BJ (cell line): ENCODE measurements at regions of chr6 and their contacts with region 1.

Region 1: DNA sequence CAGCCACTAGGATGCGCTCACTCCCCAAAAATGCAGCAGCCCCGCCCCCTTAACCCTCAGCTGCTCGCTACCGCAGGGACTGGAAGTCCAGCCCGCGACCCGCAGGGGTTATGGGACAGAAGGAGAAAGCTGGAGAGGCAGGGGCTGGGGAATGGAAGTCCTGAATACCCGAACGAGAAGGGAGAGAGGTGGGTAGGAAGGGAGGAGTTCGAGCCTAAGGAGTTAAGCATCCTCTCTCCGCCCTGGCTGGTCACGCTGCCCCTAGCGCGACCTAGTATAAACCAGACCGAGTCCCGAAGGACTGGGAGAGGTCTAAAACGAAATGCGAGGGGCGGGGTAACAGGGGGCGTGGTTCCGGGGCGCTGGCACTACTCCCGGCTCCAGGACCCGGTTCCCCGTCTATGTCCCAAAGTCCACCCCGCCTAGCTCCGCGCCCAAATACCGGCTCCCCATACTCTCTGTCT is 448 bp upstream of the DDAH2 start:
- DNase-seq: peak; percentile 58
- H3K4me3 ChIP-seq: peak overlapping the region; percentile 88
- H3K27me3 ChIP-seq: no peaks in the 10 kb centered on the region
- CTCF ChIP-seq: no peak

Region 2: DNA sequence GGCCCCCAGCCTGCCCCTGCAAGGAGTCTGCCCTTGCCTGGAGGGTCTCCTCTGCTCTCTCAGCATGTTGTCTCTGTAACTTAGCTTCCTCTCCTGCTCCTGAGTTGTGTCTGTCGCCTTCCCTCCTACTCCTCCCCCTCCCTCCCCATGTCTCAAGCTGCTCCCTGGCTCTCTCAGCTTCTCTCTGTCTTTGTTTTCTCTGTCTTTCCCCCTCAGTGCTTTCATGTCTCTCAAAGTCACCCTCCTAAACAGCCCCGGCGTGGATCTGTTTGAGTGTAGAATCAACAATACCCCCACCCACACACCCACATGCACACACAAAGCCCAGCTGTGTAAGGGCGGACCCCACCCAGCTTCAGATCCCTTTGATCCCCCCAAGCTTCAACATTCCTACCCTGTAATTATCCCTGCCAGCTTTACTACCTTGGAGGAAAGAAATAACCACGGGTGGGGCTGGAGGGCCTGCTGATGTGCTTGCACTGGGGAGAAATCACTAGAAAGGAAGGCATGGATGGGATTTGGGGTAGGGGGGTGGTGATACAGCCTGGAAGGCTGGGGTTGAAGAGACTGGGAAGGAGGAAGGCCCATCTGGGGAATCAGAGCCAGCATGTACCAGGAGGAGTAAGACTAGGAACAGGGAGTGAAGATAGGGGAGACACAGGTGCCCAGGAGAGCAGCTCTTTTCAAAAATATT is 15.4 kb before region 1 on chr6:
- CTCF ChIA-PET with region 1: interaction called, 11 read pairs
- POLR2A ChIA-PET with region 1: no interaction called
- DNase-seq: no peak
- H3K4me3 ChIP-seq: no peak overlapping the region
- H3K27me3 ChIP-seq: peaks cover 8% of the 10 kb centered on the region
- CTCF ChIP-seq: no peak

Region 3: DNA sequence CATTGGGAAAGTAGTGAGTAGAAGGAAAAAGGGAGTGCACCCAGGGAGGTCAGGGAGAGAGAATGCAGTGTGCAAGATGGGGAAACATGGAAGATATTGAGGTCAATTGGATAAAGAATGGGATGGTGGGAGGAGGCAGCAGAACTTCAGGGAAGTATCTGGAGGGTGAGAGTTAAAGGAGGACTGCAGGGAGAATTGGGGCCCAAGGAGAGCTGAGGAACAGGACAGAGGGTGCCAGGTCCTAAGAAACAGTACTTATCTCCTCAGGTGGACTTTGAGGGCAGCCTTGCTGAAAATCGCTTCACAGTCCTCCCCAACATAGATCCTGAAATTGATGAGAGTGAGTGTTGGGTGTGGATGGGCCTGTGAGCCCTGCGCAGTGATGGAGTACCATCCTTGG is 28.7 kb after region 1 on chr6:
- CTCF ChIA-PET with region 1: no interaction called
- POLR2A ChIA-PET with region 1: no interaction called
- DNase-seq: no peak
- H3K4me3 ChIP-seq: no peak overlapping the region
- H3K27me3 ChIP-seq: no peaks in the 10 kb centered on the region
- CTCF ChIP-seq: no peak

Region 4: DNA sequence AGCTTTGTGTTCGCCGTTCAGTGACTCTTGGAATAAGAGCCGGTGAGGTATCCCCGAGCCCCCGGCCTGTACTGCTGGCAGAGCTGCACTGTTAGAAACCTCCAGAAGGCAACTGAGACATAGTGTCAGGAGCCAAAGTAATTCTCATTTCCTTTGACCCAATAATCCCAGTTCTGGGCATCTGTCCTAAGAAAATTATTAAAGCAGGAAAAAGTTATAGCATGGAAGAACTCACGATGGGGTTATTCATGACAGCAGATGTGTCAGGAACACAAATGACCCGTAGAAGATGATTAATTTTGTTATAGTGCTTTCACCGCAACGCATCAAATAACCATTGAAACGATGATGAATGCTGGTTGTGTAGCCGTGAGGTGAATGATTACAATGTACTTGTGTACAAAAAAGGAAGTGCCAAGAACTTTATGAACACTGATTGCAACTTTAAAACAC is 329.0 kb after region 1 on chr6:
- CTCF ChIA-PET with region 1: no interaction called
- POLR2A ChIA-PET with region 1: no interaction called
- DNase-seq: no peak
- H3K4me3 ChIP-seq: no peak overlapping the region
- H3K27me3 ChIP-seq: no peaks in the 10 kb centered on the region
- CTCF ChIP-seq: no peak